ENCODE measurements at regions of chr9 and their contacts with region 1.

Region 1: DNA sequence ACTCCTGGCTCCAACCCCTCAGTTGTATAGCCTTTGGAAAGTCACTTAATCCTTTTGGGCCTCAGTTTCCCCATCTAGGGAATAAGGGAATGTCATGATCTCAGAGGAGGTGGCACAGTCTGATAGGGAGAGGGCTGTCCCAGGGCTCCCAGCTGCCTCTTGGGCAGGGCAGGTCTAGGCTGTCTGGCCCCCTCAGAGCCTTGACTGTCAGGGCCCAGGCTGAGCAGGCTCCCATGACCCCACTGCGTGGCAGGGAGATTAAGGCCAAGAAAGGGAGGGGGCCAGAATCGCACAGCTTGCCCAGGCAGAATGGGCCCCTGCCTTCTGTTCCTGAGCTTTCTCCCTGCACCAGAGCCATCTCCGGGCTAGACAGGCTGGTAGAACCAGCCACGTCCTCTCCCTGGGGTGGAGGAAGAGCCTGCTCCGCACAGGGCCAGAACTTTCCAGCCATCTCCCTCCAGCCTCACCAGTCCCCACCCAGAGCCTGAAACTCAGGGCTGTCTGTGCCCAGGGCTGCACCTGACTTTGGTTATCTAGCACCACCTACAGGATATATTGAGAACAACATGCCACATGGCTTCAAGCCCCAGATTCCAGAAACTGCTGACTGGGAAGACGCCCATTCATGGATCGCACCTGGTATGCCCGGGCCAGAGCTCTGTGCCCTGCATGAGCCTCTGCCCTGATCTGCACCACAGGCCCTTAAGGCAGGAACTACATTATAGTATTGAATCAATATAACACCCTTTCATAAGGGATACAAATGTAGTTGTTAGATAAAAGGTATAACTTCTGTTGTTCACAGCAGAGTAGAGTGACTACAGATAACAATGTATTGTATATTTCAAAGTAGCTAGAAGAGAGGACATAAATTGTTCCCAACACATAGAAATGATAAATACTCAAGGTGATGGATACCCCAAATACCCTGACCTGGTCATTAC is 32.0 kb downstream of the NAIF1 start:
- DNase-seq: peak; percentile 71
- ATAC-seq: peak; percentile 94
- H3K4me3 ChIP-seq: no peak overlapping the region
- H3K27ac ChIP-seq: no peak overlapping the region
- H3K4me1 ChIP-seq: no peaks in the 10 kb centered on the region
- H3K27me3 ChIP-seq: peaks cover 2% of the 10 kb centered on the region
- CTCF ChIP-seq: peak; percentile 86
- POLR2A ChIP-seq: no peak
- RAD21 ChIP-seq: peak; percentile 92

Region 2: GRCh38 chr9:127763918-127764384 is 271.1 kb before region 1 on chr9:
- CTCF ChIA-PET with region 1: no interaction called
- POLR2A ChIA-PET with region 1: no interaction called
- dilution Hi-C with region 1: no loop called
- in situ Hi-C with region 1: no loop called
- intact Hi-C with region 1: no loop called
- DNase-seq: no peak
- ATAC-seq: no peak
- H3K4me3 ChIP-seq: no peak overlapping the region
- H3K27ac ChIP-seq: no peak overlapping the region
- H3K4me1 ChIP-seq: peaks cover 2% of the 10 kb centered on the region; the same call in 1 of the 2 replicates
- H3K27me3 ChIP-seq: peaks cover 28% of the 10 kb centered on the region
- CTCF ChIP-seq: 0 out of 2 replicates have a peak, but pooled peaks have one; percentile 24
- POLR2A ChIP-seq: no peak
- RAD21 ChIP-seq: 0 out of 2 replicates have a peak, but pooled peaks have one; percentile 10

Region 3: DNA sequence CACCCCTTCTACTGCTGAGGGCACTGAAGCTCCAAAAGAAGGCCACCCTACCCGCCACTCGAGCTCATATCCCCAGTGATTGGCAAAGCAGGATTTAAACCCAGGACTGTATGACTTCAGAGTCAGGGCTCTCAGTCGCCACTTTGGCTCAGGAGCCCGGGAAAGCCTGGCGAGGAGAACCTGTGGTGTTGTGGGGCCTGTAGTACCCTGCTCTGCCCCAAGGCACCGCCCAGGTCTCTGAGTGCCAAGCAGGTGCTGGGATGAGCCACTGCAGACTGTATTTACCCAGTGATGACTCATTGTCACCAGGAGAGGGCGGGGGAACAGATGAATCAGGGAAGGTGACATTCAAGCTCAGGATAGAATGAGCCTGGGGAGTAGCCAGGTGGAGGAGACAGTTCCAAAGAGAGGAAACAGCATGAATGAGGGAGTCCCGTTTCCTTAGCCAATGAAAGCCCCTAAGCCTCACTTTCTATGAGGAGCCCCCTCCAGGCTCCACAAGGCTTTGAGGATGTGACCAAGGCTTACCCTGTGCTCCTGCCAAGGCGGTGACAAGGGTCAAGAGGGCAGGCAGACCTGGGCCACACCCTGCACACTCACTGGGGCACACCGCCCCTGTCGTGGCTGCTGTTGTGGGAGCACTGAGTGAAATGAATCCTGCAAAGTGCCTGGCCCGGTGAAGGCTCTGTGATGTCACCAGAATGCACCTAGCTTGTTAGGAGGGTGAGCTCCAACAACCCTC is 79.6 kb before region 1 on chr9:
- CTCF ChIA-PET with region 1: interaction called, 3 read pairs
- POLR2A ChIA-PET with region 1: no interaction called
- dilution Hi-C with region 1: no loop called
- in situ Hi-C with region 1: loop called (anchors 5 kb)
- intact Hi-C with region 1: no loop called
- DNase-seq: peak; percentile 43
- ATAC-seq: peak; percentile 42
- H3K4me3 ChIP-seq: no peak overlapping the region
- H3K27ac ChIP-seq: no peak overlapping the region
- H3K4me1 ChIP-seq: peaks cover 5% of the 10 kb centered on the region
- H3K27me3 ChIP-seq: no peaks in the 10 kb centered on the region
- CTCF ChIP-seq: no peak
- POLR2A ChIP-seq: no peak
- RAD21 ChIP-seq: no peak

Region 4: GRCh38 chr9:128098297-128099230 is 63.5 kb after region 1 on chr9:
- CTCF ChIA-PET with region 1: no interaction called
- POLR2A ChIA-PET with region 1: no interaction called
- dilution Hi-C with region 1: no loop called
- in situ Hi-C with region 1: no loop called
- intact Hi-C with region 1: no loop called
- DNase-seq: peak; percentile 98
- ATAC-seq: peak; percentile 75
- H3K4me3 ChIP-seq: peak overlapping the region; percentile 47
- H3K27ac ChIP-seq: peak overlapping the region; percentile 86
- H3K4me1 ChIP-seq: peaks cover 32% of the 10 kb centered on the region
- H3K27me3 ChIP-seq: no peaks in the 10 kb centered on the region
- CTCF ChIP-seq: no peak
- POLR2A ChIP-seq: peak; percentile 99
- RAD21 ChIP-seq: 0 out of 2 replicates have a peak, but pooled peaks have one; percentile 1